ENCODE measurements at regions of chr15 and their contacts with region 1.

Region 1: GRCh38 chr15:78108299-78109084 is 16.1 kb downstream of the SH2D7 start:
- DNase-seq: peak; percentile 89 to 98
- ATAC-seq: peak; percentile 85 to 96
- H3K4me3 ChIP-seq: no peak overlapping the region
- H3K27ac ChIP-seq: no peak overlapping the region
- H3K4me1 ChIP-seq: no peaks in the 10 kb centered on the region
- CTCF ChIP-seq: peak; percentile 99
- EP300 ChIP-seq: no peak
- POLR2A ChIP-seq: no peak
- RAD21 ChIP-seq: peak; percentile 92 to 95

Region 2: GRCh38 chr15:77959432-77959879 is 149.0 kb before region 1 on chr15:
- CTCF ChIA-PET with region 1: interaction called, 246 read pairs
- POLR2A ChIA-PET with region 1: no interaction called
- DNase-seq: peak; percentile 76 to 96
- ATAC-seq: peak; percentile 95 to 100
- H3K4me3 ChIP-seq: peak overlapping the region; percentile 20; the same call in 2 of the 3 replicates
- H3K27ac ChIP-seq: peak overlapping the region in 1 of 2 experiments; percentile 67; a peak in 3 of 6 replicates
- H3K4me1 ChIP-seq: no peaks in the 10 kb centered on the region
- CTCF ChIP-seq: peak; percentile 95
- EP300 ChIP-seq: no peak
- POLR2A ChIP-seq: no peak
- RAD21 ChIP-seq: peak; percentile 97 to 98

Region 3: DNA sequence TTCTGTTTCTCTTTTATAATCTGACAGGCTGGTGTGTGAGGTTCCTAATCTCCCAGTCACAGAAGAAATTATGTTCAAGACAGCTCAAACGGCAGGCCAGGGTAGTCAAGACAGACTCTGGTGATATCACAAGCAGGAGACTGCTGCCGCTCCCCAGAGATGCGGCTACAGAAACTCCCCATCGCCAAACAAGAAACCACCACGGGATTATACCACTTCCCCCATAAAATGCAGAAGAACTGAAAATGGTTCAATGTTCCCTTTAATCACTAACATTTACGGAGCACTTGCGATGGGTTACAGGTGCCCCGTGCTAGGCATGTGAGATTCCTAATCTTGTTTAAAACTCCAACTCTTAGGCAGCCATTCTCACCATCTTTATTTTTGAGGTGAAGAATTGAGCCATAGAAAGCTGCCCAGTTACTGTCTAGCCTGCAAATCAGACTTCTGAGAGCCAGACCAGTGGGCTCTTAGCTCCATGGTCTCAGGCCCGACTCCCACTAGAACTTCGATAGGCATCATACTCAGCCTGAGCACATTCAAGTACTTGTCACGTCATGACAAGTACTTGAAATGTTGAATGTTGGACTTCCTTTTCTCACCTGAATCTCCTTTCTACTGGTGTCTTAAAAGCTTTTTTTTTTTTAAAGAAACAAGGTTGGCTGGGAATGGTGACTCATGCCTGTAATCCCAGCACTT is 89.4 kb before region 1 on chr15:
- CTCF ChIA-PET with region 1: interaction called, 239 read pairs
- POLR2A ChIA-PET with region 1: no interaction called
- DNase-seq: no peak
- ATAC-seq: no peak
- H3K4me3 ChIP-seq: no peak overlapping the region
- H3K27ac ChIP-seq: no peak overlapping the region; a peak in 1 of 6 replicates
- H3K4me1 ChIP-seq: no peaks in the 10 kb centered on the region
- CTCF ChIP-seq: no peak
- EP300 ChIP-seq: no peak
- POLR2A ChIP-seq: no peak
- RAD21 ChIP-seq: no peak

Region 4: DNA sequence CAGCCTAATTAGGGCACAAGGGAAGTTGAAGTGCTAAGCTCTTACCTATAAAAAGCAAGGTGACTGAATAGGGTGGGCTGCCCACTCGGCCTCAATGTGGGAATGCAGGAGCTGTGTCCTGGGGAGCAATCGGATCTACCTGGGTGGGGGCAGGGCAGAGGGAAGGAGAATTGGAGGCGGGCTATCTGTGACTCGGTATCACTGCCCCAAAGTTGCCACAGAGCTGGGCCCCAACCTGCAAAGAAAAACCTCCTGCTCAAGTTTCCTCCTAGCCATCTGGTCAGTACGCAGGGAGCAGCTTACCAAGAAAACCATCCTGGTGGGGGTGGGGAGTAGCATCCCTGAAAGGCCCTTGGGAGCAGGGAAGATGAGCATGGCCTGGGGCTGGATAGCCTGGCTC is 12.0 kb after region 1 on chr15:
- CTCF ChIA-PET with region 1: interaction called, 79 read pairs
- POLR2A ChIA-PET with region 1: no interaction called
- DNase-seq: no peak
- ATAC-seq: no peak
- H3K4me3 ChIP-seq: no peak overlapping the region
- H3K27ac ChIP-seq: no peak overlapping the region
- H3K4me1 ChIP-seq: no peaks in the 10 kb centered on the region
- CTCF ChIP-seq: no peak
- EP300 ChIP-seq: no peak
- POLR2A ChIP-seq: no peak
- RAD21 ChIP-seq: no peak

Region 5: GRCh38 chr15:78177447-78177873 is 69.0 kb after region 1 on chr15:
- CTCF ChIA-PET with region 1: interaction called, 17 read pairs
- POLR2A ChIA-PET with region 1: no interaction called
- DNase-seq: peak; percentile 44 to 61
- ATAC-seq: peak; percentile 75 to 87
- H3K4me3 ChIP-seq: no peak overlapping the region
- H3K27ac ChIP-seq: no peak overlapping the region
- H3K4me1 ChIP-seq: no peaks in the 10 kb centered on the region
- CTCF ChIP-seq: peak; percentile 93
- EP300 ChIP-seq: no peak
- POLR2A ChIP-seq: no peak
- RAD21 ChIP-seq: peak; percentile 94 to 95

Region 6: GRCh38 chr15:78234515-78235040 is 126.1 kb after region 1 on chr15 and contains the start of gene ACSBG1:
- CTCF ChIA-PET with region 1: interaction called, 251 read pairs
- POLR2A ChIA-PET with region 1: no interaction called
- DNase-seq: no peak
- ATAC-seq: no peak
- H3K4me3 ChIP-seq: no peak within 1 kb of the TSS
- H3K27ac ChIP-seq: no peak within 1 kb of the TSS
- H3K4me1 ChIP-seq: no peaks in the 10 kb centered on the region
- CTCF ChIP-seq: no peak
- EP300 ChIP-seq: no peak
- POLR2A ChIP-seq: no peak
- RAD21 ChIP-seq: no peak
- polyA plus RNA-seq, gene ACSBG1: 0.16 and 0.21 TPM in 2 replicates

Region 7: GRCh38 chr15:79310983-79311900 is 1202.8 kb after region 1 on chr15 and contains the start of gene TMED3:
- CTCF ChIA-PET with region 1: no interaction called
- POLR2A ChIA-PET with region 1: no interaction called
- DNase-seq: peak; percentile 90 to 98
- ATAC-seq: peak; percentile 94 to 98
- H3K4me3 ChIP-seq: peak within 1 kb of the TSS; percentile 73
- H3K27ac ChIP-seq: peak within 1 kb of the TSS; percentile 87 to 91
- H3K4me1 ChIP-seq: peaks cover 16% of the 10 kb centered on the region
- CTCF ChIP-seq: peak; percentile 24; the same call in 2 of the 3 replicates
- EP300 ChIP-seq: no peak
- POLR2A ChIP-seq: peak; percentile 95
- RAD21 ChIP-seq: no peak
- polyA plus RNA-seq, gene TMED3: 202 and 220 TPM in 2 replicates